ENCODE measurements at regions of chr19 and their contacts with region 1.

Region 1: DNA sequence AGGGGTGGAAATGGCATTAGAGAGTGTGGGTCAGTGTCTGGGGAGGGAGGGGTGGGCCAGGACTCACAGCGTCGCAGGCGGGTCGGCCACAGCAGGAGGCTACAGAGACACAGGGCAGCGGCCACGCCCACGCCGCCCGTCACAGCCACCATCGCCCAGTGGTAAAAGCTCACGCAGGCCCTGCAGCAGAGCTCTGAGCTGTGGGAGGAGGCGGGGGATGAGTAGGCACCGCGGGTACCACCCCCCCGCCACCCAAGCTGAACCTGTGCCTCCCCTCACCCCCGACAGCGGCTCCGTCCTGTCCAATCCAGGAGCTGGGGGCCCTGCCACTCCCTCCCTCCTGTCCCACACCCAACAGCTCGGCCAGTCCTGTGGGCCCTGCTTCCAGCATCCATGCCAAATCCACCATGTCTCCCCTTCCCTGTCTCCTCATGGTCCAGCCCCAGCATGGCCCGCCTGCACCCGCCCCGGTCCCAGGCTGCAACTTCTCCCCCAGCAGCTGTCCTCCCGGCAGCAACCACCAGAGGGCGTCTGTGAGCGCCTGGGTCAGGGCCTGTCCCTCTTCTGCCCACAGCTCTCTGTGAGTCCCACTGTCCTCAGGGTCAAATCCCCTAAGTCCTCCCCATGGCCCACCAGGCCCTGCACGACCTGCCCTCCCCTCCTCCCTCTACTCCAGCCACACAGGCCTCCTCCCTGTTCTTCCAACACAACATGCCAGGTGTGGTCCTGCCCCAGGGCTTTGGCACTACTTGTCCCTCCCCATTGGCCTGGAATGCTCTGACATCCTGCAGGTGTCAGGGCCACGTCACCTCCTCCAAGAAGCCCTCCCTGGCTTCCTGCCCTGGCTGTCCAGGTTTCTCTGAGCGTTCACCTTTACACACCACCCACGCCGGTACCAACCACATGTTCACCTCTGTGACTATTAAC is 6.0 kb downstream of the TEKTIP1 start:
- DNase-seq: no peak
- ATAC-seq: peak; percentile 92
- H3K4me3 ChIP-seq: no peak overlapping the region
- H3K27ac ChIP-seq: no peak overlapping the region
- H3K4me1 ChIP-seq: no peaks in the 10 kb centered on the region
- H3K27me3 ChIP-seq: no peaks in the 10 kb centered on the region
- CTCF ChIP-seq: peak; percentile 85 to 99 (median 91)
- EP300 ChIP-seq: no peak
- POLR2A ChIP-seq: no peak; the same call in 1 of the 2 replicates
- RAD21 ChIP-seq: peak; percentile 72

Region 2: DNA sequence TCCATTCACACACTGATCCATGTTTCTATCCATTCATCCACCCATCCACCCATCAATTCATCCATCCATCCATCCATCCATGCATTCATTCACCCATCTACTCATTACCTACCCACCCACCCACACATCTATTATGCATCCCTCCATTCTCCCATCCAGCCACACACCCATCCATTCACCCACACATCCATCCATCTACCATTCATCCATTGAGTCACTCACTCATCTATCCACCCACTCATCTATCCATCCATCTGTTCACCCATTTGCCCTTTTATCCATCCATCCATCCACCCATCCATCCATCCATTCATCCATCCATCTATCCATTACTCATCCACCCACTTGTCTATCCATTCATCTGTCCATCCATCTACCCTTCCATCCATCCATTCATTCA is 290.5 kb before region 1 on chr19:
- CTCF ChIA-PET with region 1: no interaction called
- POLR2A ChIA-PET with region 1: no interaction called
- RAD21 ChIA-PET with region 1: no interaction called
- SMC1A ChIA-PET with region 1: no interaction called
- in situ Hi-C with region 1: no loop called
- intact Hi-C with region 1: no loop called
- DNase-seq: no peak
- ATAC-seq: no peak
- H3K4me3 ChIP-seq: no peak overlapping the region
- H3K27ac ChIP-seq: no peak overlapping the region
- H3K4me1 ChIP-seq: no peaks in the 10 kb centered on the region
- H3K27me3 ChIP-seq: no peaks in the 10 kb centered on the region
- CTCF ChIP-seq: no peak
- EP300 ChIP-seq: no peak
- POLR2A ChIP-seq: no peak
- RAD21 ChIP-seq: no peak

Region 3: DNA sequence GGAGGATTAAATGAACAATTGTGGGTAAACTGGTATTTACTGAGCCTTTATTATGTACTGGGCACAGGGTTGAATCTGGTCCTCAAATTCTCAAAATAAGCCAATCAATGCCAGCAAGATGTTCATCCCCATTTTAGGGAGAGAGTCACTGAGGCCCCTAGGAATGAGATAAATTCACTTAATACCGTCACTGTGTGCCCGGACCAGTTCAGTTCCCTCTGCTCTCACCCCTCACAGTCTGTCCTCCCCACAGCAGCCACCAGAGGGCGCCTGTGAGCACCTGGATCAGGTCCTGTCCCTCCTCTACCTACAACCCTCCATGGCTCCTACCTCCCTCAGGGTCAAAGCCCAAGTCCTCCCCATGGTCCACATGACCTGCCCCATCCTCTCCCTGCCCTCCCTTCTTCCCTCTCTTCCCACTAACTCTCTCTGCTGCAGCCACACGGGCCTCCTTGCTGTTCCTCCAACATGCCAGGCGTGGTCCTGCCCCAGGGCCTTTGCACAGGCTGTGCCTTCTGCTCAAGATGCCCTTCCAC is 220.6 kb before region 1 on chr19:
- CTCF ChIA-PET with region 1: no interaction called
- POLR2A ChIA-PET with region 1: no interaction called
- RAD21 ChIA-PET with region 1: no interaction called
- SMC1A ChIA-PET with region 1: no interaction called
- in situ Hi-C with region 1: no loop called
- intact Hi-C with region 1: no loop called
- DNase-seq: no peak
- ATAC-seq: peak; percentile 90
- H3K4me3 ChIP-seq: no peak overlapping the region
- H3K27ac ChIP-seq: no peak overlapping the region
- H3K4me1 ChIP-seq: no peaks in the 10 kb centered on the region
- H3K27me3 ChIP-seq: no peaks in the 10 kb centered on the region
- CTCF ChIP-seq: peak; percentile 71 to 90 (median 80)
- EP300 ChIP-seq: no peak
- POLR2A ChIP-seq: no peak
- RAD21 ChIP-seq: peak; percentile 39; the same call in 1 of the 2 replicates

Region 4: DNA sequence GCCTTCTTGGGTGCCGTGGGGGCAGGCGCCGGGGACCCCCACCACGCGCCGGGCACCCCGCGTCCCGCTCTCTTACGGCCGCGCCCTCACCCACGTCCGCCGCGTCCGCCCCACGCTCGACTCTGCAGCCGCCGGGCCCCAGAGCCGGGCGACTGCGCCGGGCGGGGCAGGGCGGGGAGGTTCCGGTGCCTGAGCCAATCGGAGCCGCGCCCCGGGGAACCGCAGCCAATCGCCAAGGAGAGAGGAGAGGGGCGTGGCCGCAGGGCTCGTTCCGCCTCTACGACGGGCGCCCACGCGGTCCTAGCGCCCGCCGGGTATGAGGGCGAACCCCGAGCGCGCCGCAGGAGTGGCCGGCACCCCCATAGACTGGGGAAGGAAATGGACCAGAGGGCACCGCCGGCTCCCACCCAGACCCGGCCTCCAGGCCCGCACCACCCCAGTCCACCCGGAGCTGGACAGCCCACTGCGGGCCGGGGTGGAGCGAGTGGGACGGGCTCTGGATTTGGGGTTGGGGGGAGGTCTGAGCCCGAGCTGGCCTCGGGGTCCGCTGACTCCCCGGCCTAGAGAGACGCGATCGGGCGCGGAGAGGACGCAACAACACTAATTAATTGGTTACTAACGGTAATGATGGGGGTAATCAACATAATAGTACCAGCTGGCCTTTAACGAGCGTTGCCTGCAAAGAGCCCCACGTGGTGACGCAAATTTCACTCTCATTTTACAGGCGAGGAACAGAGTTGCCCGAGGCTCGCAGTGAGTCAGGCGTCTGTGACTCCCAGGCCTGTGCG is 12.7 kb after region 1 on chr19 and contains the start of gene MFSD12:
- CTCF ChIA-PET with region 1: interaction called, 20 read pairs
- POLR2A ChIA-PET with region 1: interaction called, 5 read pairs
- RAD21 ChIA-PET with region 1: interaction called, 4 read pairs
- SMC1A ChIA-PET with region 1: no interaction called
- in situ Hi-C with region 1: no loop called
- intact Hi-C with region 1: no loop called
- DNase-seq: peak; percentile 57
- ATAC-seq: peak; percentile 94
- H3K4me3 ChIP-seq: peak within 1 kb of the TSS; percentile 99
- H3K27ac ChIP-seq: peak within 1 kb of the TSS; percentile 57
- H3K4me1 ChIP-seq: peaks cover 25% of the 10 kb centered on the region
- H3K27me3 ChIP-seq: no peaks in the 10 kb centered on the region
- CTCF ChIP-seq: no peak
- EP300 ChIP-seq: no peak
- POLR2A ChIP-seq: peak; percentile 86
- RAD21 ChIP-seq: no peak
- polyA plus RNA-seq, gene MFSD12: 0.58 to 1.9 TPM

Region 5: GRCh38 chr19:3618144-3618810 is 73.3 kb after region 1 on chr19:
- CTCF ChIA-PET with region 1: interaction called, 7 read pairs
- POLR2A ChIA-PET with region 1: no interaction called
- RAD21 ChIA-PET with region 1: no interaction called
- SMC1A ChIA-PET with region 1: no interaction called
- in situ Hi-C with region 1: no loop called
- intact Hi-C with region 1: loop called (anchors 1 kb)
- DNase-seq: peak; percentile 12
- ATAC-seq: peak; percentile 97
- H3K4me3 ChIP-seq: no peak overlapping the region
- H3K27ac ChIP-seq: no peak overlapping the region
- H3K4me1 ChIP-seq: no peaks in the 10 kb centered on the region
- H3K27me3 ChIP-seq: no peaks in the 10 kb centered on the region
- CTCF ChIP-seq: peak; percentile 85 to 96 (median 89)
- EP300 ChIP-seq: no peak
- POLR2A ChIP-seq: no peak
- RAD21 ChIP-seq: peak; percentile 80

Region 6: DNA sequence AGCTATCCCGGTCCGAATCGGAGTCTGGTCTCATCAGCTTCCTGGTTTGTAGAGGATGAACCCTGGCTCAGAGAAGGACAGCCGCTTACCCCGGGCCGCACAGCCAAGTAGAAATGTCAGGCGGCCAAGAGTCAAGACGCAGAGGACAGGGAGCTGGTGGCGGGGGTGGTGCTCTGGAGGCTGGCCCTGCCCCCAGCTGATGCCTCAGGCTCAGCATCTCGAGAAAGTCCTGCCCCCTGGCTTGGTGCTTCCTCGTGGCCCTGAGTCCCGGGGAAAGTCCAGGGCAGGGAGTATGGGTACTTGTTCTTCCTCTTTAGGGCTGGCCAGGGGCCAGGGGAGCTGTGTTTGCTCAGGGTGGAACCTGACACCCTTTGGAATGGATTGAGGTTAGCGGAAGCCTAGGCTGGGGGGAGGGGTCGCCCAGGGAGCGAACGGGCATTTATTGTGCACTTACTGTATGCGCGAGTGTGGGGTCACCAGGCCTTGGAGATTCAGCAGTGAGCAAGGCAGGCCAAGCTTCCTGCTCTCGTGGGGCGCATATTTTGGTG is 165.3 kb after region 1 on chr19:
- CTCF ChIA-PET with region 1: no interaction called
- POLR2A ChIA-PET with region 1: no interaction called
- RAD21 ChIA-PET with region 1: no interaction called
- SMC1A ChIA-PET with region 1: no interaction called
- in situ Hi-C with region 1: no loop called
- intact Hi-C with region 1: loop called (anchors 5 kb)
- DNase-seq: no peak
- ATAC-seq: peak; percentile 52
- H3K4me3 ChIP-seq: no peak overlapping the region
- H3K27ac ChIP-seq: no peak overlapping the region
- H3K4me1 ChIP-seq: no peaks in the 10 kb centered on the region
- H3K27me3 ChIP-seq: no peaks in the 10 kb centered on the region
- CTCF ChIP-seq: no peak
- EP300 ChIP-seq: no peak
- POLR2A ChIP-seq: no peak
- RAD21 ChIP-seq: no peak

Measured in GM12878 (cell line).